H1 (cell line): ENCODE measurements at regions of chr2 and their contacts with region 1.

Region 1: GRCh38 chr2:198309673-198310280 is 505.4 kb downstream of the PLCL1 start:
- DNase-seq: peak in 1 of 2 experiments; percentile 72
- H3K4me3 ChIP-seq: no peak overlapping the region
- H3K27ac ChIP-seq: no peak overlapping the region
- H3K4me1 ChIP-seq: no peaks in the 10 kb centered on the region; a peak in 2 of 7 replicates
- H3K27me3 ChIP-seq: no peaks in the 10 kb centered on the region
- CTCF ChIP-seq: peak; percentile 30 to 76 (median 59); a peak in 3 of 4 replicates
- EP300 ChIP-seq: no peak
- POLR2A ChIP-seq: no peak
- RAD21 ChIP-seq: peak; percentile 70 to 77

Region 2: GRCh38 chr2:198220763-198221610 is 88.8 kb before region 1 on chr2:
- CTCF ChIA-PET with region 1: no interaction called
- POLR2A ChIA-PET with region 1: no interaction called
- DNase-seq: no peak
- H3K4me3 ChIP-seq: no peak overlapping the region
- H3K27ac ChIP-seq: no peak overlapping the region
- H3K4me1 ChIP-seq: peaks cover 0 to 3% (median 0%) of the 10 kb centered on the region in 4 experiments; a peak in 1 of 7 replicates
- H3K27me3 ChIP-seq: no peaks in the 10 kb centered on the region
- CTCF ChIP-seq: no peak
- EP300 ChIP-seq: no peak
- POLR2A ChIP-seq: no peak
- RAD21 ChIP-seq: no peak

Region 3: GRCh38 chr2:198296665-198297308 is 13.0 kb before region 1 on chr2:
- CTCF ChIA-PET with region 1: interaction called, 10 read pairs
- POLR2A ChIA-PET with region 1: interaction called, 3 read pairs
- DNase-seq: peak; percentile 53 to 70
- H3K4me3 ChIP-seq: peak overlapping the region in 1 of 4 experiments; percentile 44; a peak in 1 of 8 replicates
- H3K27ac ChIP-seq: no peak overlapping the region
- H3K4me1 ChIP-seq: no peaks in the 10 kb centered on the region
- H3K27me3 ChIP-seq: no peaks in the 10 kb centered on the region
- CTCF ChIP-seq: peak; percentile 39 to 82 (median 69)
- EP300 ChIP-seq: no peak
- POLR2A ChIP-seq: no peak
- RAD21 ChIP-seq: peak; percentile 94 to 97

Region 4: GRCh38 chr2:198322294-198322693 is 12.5 kb after region 1 on chr2:
- CTCF ChIA-PET with region 1: interaction called, 13 read pairs
- POLR2A ChIA-PET with region 1: no interaction called
- DNase-seq: no peak
- H3K4me3 ChIP-seq: no peak overlapping the region
- H3K27ac ChIP-seq: no peak overlapping the region
- H3K4me1 ChIP-seq: peaks cover 0 to under 1% (median 0%) of the 10 kb centered on the region in 4 experiments; a peak in 2 of 7 replicates
- H3K27me3 ChIP-seq: no peaks in the 10 kb centered on the region
- CTCF ChIP-seq: peak; percentile 43 to 61 (median 60)
- EP300 ChIP-seq: no peak
- POLR2A ChIP-seq: no peak
- RAD21 ChIP-seq: peak; percentile 36 to 42

Region 5: GRCh38 chr2:198337368-198337767 is 27.6 kb after region 1 on chr2:
- CTCF ChIA-PET with region 1: interaction called, 19 read pairs
- POLR2A ChIA-PET with region 1: no interaction called
- DNase-seq: no peak
- H3K4me3 ChIP-seq: peak overlapping the region in 1 of 4 experiments; percentile 3; a peak in 1 of 8 replicates
- H3K27ac ChIP-seq: no peak overlapping the region
- H3K4me1 ChIP-seq: no peaks in the 10 kb centered on the region; a peak in 1 of 7 replicates
- H3K27me3 ChIP-seq: no peaks in the 10 kb centered on the region
- CTCF ChIP-seq: no peak
- EP300 ChIP-seq: no peak
- POLR2A ChIP-seq: no peak
- RAD21 ChIP-seq: no peak

Region 6: DNA sequence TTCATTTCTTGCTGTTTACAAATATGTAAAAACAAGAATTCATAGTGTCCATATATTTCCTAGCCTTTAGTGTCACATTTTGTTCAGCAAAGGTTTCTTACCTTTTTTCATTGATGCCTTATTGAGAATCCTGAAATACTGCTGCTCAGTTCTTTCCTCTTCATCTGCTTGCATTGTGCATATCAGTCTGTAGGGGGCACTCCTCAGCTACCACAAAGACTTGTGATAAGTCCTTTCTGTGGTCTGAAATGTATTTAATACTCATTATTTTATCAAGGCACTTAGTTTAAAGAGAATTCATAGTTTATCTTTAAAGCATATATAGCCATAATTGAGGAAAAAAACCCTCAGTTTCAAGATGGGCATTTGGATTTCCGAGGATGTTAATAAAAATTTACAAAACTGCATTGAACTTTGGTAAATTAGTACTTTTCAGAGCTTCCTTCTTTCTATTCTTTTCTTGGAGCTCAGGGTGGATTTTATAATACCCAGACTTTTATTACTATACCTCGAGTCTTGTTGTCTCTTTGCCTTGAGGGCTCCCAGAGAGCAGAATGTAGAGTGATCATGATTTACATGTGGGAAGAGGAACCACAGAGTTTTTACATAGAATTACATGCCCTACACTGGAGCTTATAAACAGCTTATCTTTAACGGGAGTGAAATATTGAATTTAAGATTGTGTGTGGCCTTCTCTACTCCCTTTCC is 64.8 kb after region 1 on chr2:
- CTCF ChIA-PET with region 1: interaction called, 11 read pairs
- POLR2A ChIA-PET with region 1: no interaction called
- DNase-seq: peak; percentile 5 to 59
- H3K4me3 ChIP-seq: no peak overlapping the region
- H3K27ac ChIP-seq: no peak overlapping the region
- H3K4me1 ChIP-seq: no peaks in the 10 kb centered on the region
- H3K27me3 ChIP-seq: no peaks in the 10 kb centered on the region
- CTCF ChIP-seq: peak in 2 of 3 experiments; percentile 48 to 72; a peak in 2 of 4 replicates
- EP300 ChIP-seq: no peak
- POLR2A ChIP-seq: no peak
- RAD21 ChIP-seq: peak; percentile 84 to 85

Region 7: DNA sequence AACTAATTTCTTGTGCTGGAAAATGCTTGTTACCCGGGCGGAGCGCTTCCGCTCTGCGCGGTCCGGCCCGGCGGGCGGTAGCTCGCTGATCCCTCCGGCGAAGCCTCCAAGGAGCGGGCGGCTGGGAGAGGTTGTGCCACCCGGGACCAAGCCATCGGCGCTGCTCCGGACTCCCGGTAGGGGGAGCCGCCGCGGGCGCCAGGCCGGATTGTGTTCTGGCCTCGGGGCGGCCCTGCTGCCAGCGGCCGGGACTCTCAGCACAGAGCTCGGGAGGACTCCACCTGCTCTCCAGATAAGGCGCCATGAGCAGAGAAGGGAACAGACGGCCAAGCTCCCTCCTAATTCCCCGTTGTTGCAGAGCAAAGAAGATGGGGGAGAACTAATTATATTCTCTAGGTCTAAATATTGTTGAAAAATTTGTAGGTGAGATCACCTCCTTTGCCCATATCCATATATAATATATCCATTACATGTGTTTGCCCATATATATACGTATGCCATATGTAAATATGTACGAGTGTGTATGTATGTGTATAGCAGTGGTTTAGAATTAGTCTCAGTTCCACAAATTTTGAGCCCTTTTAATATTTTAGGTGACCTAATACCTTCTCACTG is 1161.8 kb after region 1 on chr2:
- CTCF ChIA-PET with region 1: interaction called, 10 read pairs
- POLR2A ChIA-PET with region 1: no interaction called
- DNase-seq: peak in 1 of 2 experiments; percentile 94
- H3K4me3 ChIP-seq: peak overlapping the region; percentile 29 to 60 (median 40); a peak in 7 of 8 replicates
- H3K27ac ChIP-seq: no peak overlapping the region
- H3K4me1 ChIP-seq: peaks cover 8 to 23% (median 14%) of the 10 kb centered on the region in 4 experiments
- H3K27me3 ChIP-seq: peaks cover 41 to 61% (median 57%) of the 10 kb centered on the region in 4 experiments
- CTCF ChIP-seq: peak in 2 of 3 experiments; percentile 81 to 93; a peak in 3 of 4 replicates
- EP300 ChIP-seq: 0 out of 3 replicates have a peak, but pooled peaks of 1 of the 2 experiments have one; percentile 23
- POLR2A ChIP-seq: no peak
- RAD21 ChIP-seq: peak; percentile 54 to 70

Region 8: GRCh38 chr2:199488772-199489400 is 1179.1 kb after region 1 on chr2:
- CTCF ChIA-PET with region 1: interaction called, 16 read pairs
- POLR2A ChIA-PET with region 1: no interaction called
- DNase-seq: peak in 1 of 2 experiments; percentile 88
- H3K4me3 ChIP-seq: no peak overlapping the region
- H3K27ac ChIP-seq: no peak overlapping the region
- H3K4me1 ChIP-seq: 0 out of 7 replicates have a peak, but pooled peaks cover 0 to 2% (median 0%) of the 10 kb centered on the region in 4 experiments
- H3K27me3 ChIP-seq: no peaks in the 10 kb centered on the region
- CTCF ChIP-seq: peak; percentile 75 to 88 (median 85)
- EP300 ChIP-seq: no peak
- POLR2A ChIP-seq: no peak
- RAD21 ChIP-seq: peak; percentile 73 to 82